Activated naive CD4-positive, alpha-beta T cell treated with anti-CD3 and anti-CD28 coated beads, Interleukin-2, amount 10 ng/mL, durations not matched to agents 7 days and 5 days (primary cell): ENCODE measurements at regions of chr12 and their contacts with region 1.

Region 1: DNA sequence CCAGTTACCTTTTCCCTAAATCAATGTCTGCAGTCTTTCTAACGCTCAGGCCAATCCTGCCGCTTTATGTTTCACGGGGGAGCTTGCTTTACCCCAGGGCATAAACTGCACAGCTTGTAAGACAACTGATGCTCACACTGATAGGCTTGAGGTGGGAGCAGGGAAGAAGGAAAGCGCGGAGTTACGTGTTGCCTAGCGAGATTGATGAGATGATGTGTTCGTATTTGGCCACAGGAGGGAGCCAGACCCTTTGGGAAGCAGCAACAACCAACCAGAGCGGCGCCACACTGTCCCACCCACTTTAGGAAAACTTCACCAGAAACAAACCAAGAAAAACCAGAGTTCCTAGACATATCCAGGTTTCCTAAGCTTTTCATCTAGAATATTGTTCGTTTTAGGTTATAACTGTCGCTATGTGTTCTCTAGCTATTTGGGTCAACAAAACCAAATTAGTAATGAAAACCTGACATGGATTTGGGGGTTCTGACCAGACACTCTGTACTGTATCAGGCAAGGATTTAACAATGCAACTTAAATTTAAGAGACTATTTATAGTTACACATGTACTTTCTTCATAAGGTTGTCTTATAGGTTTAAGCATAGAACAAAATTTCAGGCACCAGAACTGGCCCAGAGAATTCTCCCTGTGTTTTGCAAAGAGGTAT is 2.4 kb downstream of the IL26 start:
- DNase-seq: peak; percentile 81
- H3K4me3 Mint-ChIP-seq: no peak overlapping the region
- H3K27ac Mint-ChIP-seq: no peak overlapping the region
- H3K4me1 Mint-ChIP-seq: peaks cover 10% of the 10 kb centered on the region
- H3K27me3 Mint-ChIP-seq: peaks cover 5% of the 10 kb centered on the region

Region 2: DNA sequence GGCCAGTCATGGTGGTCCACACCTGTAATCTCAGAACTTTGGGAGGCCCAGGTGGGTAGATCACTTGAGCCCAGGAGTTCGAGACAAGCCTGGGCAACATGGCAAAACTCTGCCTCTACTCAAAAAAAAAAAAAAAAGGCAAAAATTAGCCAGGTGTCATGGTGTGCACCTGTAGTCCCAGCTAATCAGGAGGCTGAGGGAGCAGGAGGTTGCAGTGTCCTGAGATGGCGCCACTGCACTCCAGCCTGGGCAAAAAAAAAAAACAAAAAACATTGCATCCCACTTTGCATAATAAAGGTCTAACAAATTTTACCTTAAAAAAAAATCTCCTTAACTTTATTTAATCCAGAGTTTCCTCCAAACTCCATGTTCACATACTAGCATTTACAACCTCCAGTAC is 373.3 kb before region 1 on chr12:
- CTCF ChIA-PET with region 1: no interaction called
- DNase-seq: no peak
- H3K4me3 Mint-ChIP-seq: no peak overlapping the region
- H3K27ac Mint-ChIP-seq: no peak overlapping the region
- H3K4me1 Mint-ChIP-seq: no peaks in the 10 kb centered on the region
- H3K27me3 Mint-ChIP-seq: peaks cover 4% of the 10 kb centered on the region

Region 3: GRCh38 chr12:68040450-68041075 is 182.7 kb before region 1 on chr12:
- CTCF ChIA-PET with region 1: interaction called, 52 read pairs
- DNase-seq: peak; percentile 74
- H3K4me3 Mint-ChIP-seq: no peak overlapping the region
- H3K27ac Mint-ChIP-seq: no peak overlapping the region
- H3K4me1 Mint-ChIP-seq: peaks cover 21% of the 10 kb centered on the region
- H3K27me3 Mint-ChIP-seq: no peaks in the 10 kb centered on the region

Region 4: GRCh38 chr12:68148258-68148951 is 74.8 kb before region 1 on chr12:
- CTCF ChIA-PET with region 1: no interaction called
- DNase-seq: no peak
- H3K4me3 Mint-ChIP-seq: no peak overlapping the region
- H3K27ac Mint-ChIP-seq: no peak overlapping the region
- H3K4me1 Mint-ChIP-seq: peaks cover 3% of the 10 kb centered on the region
- H3K27me3 Mint-ChIP-seq: peaks cover 6% of the 10 kb centered on the region

Region 5: GRCh38 chr12:68236421-68237059 is 13.3 kb after region 1 on chr12:
- CTCF ChIA-PET with region 1: interaction called, 24 read pairs
- DNase-seq: peak; percentile 62
- H3K4me3 Mint-ChIP-seq: peak overlapping the region; percentile 73
- H3K27ac Mint-ChIP-seq: peak overlapping the region; percentile 87
- H3K4me1 Mint-ChIP-seq: peaks cover 58% of the 10 kb centered on the region
- H3K27me3 Mint-ChIP-seq: no peaks in the 10 kb centered on the region